Cardiac septum (tissue), 1 donor: ENCODE measurements at regions of chr4 and their contacts with region 1.

Region 1: DNA sequence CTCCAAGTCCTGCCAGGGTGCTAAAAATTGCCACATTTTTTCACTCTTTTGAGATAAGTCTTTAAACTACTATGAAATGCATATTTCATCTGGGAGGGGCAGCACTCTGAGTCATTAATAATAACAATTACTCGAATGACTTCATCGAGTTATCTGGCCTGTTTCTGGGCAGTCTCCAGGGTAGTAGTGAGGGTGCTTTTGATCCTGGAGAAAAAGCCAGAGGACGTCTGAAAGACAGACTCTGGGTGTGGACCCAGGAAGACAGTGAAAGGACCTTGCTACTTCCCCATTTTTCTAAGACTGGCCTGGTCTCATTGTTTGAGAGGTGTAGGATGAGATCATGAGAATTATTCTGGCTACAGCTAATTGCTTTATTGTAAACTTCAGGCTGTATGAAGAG is 42.2 kb upstream of the SRD5A3 start:
- DNase-seq: no peak

Region 2: DNA sequence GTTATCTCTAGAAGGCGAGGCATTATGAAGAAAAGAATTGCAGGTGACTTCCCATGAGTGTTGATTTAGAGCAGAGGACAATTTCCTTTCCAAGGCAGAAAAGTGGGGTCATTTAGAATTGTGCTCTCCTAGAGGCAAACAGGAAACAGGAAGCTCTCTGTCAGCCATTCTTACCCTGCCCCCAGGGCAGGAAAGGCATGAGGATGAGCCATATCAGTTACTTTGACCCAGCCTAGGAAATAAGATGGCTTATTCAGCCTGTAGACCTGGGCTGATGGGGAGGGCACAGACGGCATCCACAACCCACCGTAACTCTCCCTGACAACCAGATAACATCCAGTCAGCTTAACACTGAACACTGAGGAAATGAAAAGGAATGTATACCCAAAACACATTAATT is 89.6 kb before region 1 on chr4:
- intact Hi-C with region 1: loop called (anchors 10 kb)
- DNase-seq: no peak

Region 3: DNA sequence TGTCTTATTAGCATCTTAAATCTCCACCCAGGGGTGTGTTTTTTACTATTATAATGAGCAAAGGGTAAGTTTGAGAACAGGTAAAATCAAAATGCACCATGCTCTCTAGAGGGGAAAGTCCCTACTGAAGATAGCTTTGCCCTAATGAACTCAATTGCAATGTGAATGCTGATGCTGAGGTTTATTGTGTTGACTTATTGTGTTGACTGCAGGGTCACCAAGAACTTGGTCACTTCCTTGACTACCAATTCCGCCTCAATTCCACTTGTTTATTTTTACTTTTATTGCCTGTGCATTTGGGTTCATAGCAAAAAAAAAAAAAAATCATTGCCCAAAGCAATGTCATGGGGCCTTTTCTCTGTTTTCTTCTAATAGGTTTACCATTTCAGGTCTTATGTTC is 25.5 kb before region 1 on chr4:
- intact Hi-C with region 1: no loop called
- DNase-seq: no peak

Region 4: DNA sequence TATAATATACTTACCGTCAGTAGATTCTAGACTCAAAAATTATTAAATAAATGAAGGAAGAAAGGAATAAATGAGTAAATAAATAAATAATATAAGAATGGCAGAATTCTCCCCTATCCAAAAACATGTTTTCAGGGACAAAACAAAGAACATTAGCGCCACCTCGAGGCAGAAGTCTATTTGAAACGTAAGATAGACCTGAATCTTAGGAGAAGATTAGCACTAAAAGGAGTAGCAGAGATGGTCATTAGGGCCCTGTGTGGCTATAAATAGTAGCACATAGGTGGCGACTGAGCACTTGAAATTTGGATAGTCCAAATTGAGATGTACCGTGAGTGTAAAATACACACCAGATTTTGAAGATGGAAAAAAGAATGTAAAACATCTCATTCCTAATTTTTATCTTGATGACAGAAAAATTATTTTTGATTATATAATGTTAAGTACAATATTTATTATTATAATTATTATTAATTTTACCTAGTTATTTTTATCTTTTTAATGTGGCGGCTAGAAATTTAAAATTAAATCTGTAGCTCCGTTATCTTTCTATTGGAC is 18.0 kb after region 1 on chr4:
- intact Hi-C with region 1: no loop called
- DNase-seq: no peak